ENCODE measurements at regions of chrX and their contacts with region 1.

Region 1: DNA sequence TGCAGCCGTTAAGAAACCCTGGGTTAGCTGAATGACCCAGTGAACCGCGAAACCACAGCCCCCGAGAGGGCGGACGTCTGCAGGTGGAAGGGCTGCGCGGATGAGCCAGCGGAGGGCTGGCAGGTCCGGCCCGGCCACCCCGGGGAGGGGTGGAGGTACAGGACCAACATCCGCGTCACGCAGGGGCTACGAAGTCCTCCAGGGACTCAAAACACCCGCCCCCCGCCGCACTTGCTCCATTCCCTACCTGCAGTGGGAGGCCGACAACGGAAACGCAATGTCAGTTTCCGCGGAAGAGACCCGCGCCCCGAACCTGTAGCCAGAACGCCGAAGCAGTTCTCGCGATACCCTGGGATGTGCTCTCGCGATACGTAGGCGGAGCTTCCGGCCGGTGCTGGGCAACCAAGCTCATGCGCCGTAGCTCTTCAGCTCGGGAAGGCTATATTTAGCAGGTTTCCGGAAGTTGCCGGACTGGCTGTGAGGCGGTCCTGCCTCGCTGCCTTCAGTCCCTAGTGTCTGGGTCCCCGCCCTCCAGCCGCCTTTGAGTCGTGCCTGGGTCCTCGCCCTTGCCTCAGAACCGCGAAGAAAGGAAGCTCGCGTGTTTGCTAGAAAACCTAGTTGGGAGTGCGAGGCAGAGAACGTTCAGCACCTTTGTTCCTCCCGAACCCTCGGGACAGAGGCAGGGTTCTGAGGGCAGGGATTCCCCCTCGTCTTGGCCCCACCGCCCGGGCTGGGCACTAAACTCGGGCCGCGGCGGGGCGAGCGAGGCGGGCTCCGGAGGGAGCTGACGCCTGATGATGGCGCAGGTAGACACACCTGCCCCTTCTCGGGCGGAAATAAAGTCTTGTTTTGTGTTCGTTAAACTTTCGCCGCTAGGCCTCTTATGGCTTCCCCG is at the starts of genes OFD1 and TRAPPC2:
- H3K4me3 ChIP-seq: peak within 1 kb of the TSS; percentile 85
- H3K27ac ChIP-seq: peak within 1 kb of the TSS; percentile 96
- H3K4me1 ChIP-seq: peaks cover 5% of the 10 kb centered on the region; the same call in 1 of the 2 replicates
- CTCF ChIP-seq: no peak; the same call in 1 of the 2 replicates

Region 2: DNA sequence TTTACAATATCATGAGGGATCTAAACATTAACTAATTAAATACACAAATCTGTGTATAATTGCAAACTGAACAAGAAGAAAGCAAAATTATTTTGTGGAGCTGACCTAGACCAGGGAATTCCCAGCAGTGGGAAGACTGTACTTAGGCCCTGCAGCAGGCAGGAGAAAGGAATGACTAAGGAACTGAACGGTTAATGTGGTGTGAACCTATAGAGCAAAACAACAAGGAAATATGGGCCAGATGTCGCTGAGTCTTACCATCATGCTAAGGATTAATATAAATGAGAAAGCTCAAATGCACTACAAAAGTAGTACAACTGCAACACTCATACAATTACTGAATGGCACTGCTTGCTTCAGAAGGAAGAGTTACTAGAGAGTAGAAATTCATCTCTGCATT is 294.3 kb before region 1 on chrX:
- CTCF ChIA-PET with region 1: no interaction called
- POLR2A ChIA-PET with region 1: no interaction called
- H3K4me3 ChIP-seq: no peak overlapping the region
- H3K27ac ChIP-seq: no peak overlapping the region
- H3K4me1 ChIP-seq: no peaks in the 10 kb centered on the region
- CTCF ChIP-seq: no peak

Region 3: GRCh38 chrX:13506574-13506973 is 228.0 kb before region 1 on chrX:
- CTCF ChIA-PET with region 1: interaction called, 12 read pairs
- POLR2A ChIA-PET with region 1: interaction called, 3 read pairs
- H3K4me3 ChIP-seq: no peak overlapping the region
- H3K27ac ChIP-seq: no peak overlapping the region
- H3K4me1 ChIP-seq: no peaks in the 10 kb centered on the region
- CTCF ChIP-seq: peak; percentile 23; the same call in 1 of the 2 replicates

Region 4: GRCh38 chrX:13581554-13581953 is 153.0 kb before region 1 on chrX:
- CTCF ChIA-PET with region 1: no interaction called
- POLR2A ChIA-PET with region 1: no interaction called
- H3K4me3 ChIP-seq: no peak overlapping the region
- H3K27ac ChIP-seq: no peak overlapping the region
- H3K4me1 ChIP-seq: no peaks in the 10 kb centered on the region
- CTCF ChIP-seq: no peak

Region 5: GRCh38 chrX:13669246-13669737 is 65.2 kb before region 1 on chrX:
- CTCF ChIA-PET with region 1: no interaction called
- POLR2A ChIA-PET with region 1: interaction called, 24 read pairs
- H3K4me3 ChIP-seq: no peak overlapping the region
- H3K27ac ChIP-seq: peak overlapping the region; percentile 74
- H3K4me1 ChIP-seq: peaks cover 22% of the 10 kb centered on the region
- CTCF ChIP-seq: no peak

Region 6: GRCh38 chrX:13697455-13697854 is 37.1 kb before region 1 on chrX:
- CTCF ChIA-PET with region 1: interaction called, 5 read pairs
- POLR2A ChIA-PET with region 1: interaction called, 46 read pairs
- H3K4me3 ChIP-seq: no peak overlapping the region
- H3K27ac ChIP-seq: no peak overlapping the region
- H3K4me1 ChIP-seq: peaks cover 26% of the 10 kb centered on the region
- CTCF ChIP-seq: no peak

Region 7: DNA sequence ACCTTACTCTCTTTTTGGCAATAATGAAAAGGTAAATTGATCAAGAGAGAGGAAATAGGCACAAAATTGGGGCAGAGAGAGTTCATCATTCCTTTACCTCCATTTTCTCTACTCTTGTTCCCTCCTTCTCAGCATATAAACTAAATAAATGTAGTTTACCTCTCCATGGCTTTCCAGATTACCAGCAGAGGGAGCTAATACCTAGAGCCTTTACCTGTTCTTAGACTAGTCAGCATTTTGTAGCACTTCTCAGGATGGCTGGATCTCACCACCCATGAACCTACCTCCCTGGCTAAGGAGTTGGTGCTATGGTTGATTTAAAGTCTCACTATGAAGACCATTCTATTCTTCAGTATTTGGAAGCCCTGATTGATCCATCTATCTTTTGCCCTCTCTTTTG is 15.7 kb after region 1 on chrX:
- CTCF ChIA-PET with region 1: interaction called, 92 read pairs
- POLR2A ChIA-PET with region 1: interaction called, 11 read pairs
- H3K4me3 ChIP-seq: no peak overlapping the region
- H3K27ac ChIP-seq: no peak overlapping the region
- H3K4me1 ChIP-seq: no peaks in the 10 kb centered on the region
- CTCF ChIP-seq: no peak

Measured in HEK293 (cell line).